ENCODE measurements at regions of chr6 and their contacts with region 1.

Region 1: GRCh38 chr6:93419304-93420162 is at the start of gene EPHA7:
- DNase-seq: peak; percentile 92 to 100 (median 96)

Region 2: GRCh38 chr6:92810913-92811312 is 608.6 kb before region 1 on chr6:
- intact Hi-C with region 1: loop called (anchors 10 kb)
- DNase-seq: peak in 5 of 10 donors; percentile 12 to 74 (median 17)

Region 3: DNA sequence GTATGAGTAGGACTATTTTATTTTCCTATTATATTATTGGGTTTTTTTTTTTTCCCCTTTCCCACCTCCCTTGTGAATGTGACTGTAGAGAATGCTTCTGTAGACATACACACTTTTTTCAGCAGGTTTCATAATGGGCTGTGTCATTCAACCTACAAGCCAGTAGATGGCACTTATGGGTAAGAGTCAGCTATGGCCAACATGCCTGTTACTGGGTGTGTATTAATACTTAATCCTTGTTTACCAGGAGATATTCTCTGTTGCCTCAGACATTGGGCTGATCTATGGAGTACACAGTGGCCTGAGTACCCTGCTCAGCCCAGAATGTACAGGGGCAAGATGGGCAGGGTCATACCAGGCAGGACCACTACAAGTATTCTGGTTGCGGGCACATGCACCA is 382.7 kb before region 1 on chr6:
- intact Hi-C with region 1: loop called (anchors 5 kb)
- DNase-seq: no peak

Region 4: GRCh38 chr6:94254689-94255088 is 835.2 kb after region 1 on chr6:
- intact Hi-C with region 1: loop called (anchors 10 kb)
- DNase-seq: no peak

Measured in posterior cingulate gyrus (tissue), 11 donors.